Heart left ventricle (tissue), 16 donors: ENCODE measurements at regions of chr14 and their contacts with region 1.

Region 1: DNA sequence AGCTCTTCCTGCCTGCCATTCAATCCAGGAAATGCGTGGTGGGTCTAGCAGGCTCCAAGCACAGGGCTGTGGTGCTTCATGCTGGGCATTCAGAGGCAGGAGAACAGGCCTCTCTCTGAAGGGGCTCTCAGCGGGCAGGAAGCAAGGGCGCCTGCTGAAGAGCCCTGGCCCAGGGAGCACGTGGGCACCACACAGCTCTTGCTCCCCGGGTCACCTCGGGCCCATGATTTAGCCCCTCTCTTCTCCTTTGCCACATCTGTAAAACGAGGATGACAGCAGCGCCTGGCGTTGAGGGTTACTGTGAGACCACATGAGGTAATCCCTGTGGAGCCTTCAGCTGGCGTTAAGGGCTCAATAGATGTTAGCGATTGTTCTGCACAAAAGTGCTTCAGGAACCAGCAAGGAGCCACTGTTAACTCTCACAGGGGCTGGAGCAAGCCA is 37.6 kb upstream of the SPTLC2 start:
- DNase-seq: no peak
- ATAC-seq: peak in 1 of 4 donors; percentile 21
- H3K4me3 ChIP-seq: no peak overlapping the region
- H3K27ac ChIP-seq: no peak overlapping the region
- H3K4me1 ChIP-seq: peaks cover 0 to 30% (median 0%) of the 10 kb centered on the region in 12 donors
- H3K27me3 ChIP-seq: no peaks in the 10 kb centered on the region
- CTCF ChIP-seq: no peak
- POLR2A ChIP-seq: no peak

Region 2: DNA sequence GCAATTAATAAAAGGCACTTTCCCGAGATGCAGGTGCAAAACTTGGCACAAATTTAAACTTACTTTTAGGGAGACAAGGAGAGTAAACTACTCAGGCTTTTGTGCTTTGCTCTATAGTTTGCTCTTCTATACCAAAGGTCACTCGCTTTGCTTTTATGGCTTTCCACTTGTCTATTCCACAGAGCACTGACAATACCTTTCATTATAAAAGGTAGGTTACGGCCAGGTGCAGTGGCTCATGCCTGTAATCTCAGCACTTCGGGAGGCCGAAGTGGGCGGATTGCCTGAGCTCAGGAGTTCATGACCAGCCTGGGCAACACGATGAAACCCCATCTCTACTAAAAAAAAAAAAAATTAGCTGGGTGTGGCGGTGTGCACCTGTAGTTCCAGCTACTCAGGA is 20.9 kb after region 1 on chr14:
- intact Hi-C with region 1: no loop called
- DNase-seq: no peak
- ATAC-seq: no peak
- H3K4me3 ChIP-seq: no peak overlapping the region
- H3K27ac ChIP-seq: no peak overlapping the region
- H3K4me1 ChIP-seq: no peaks in the 10 kb centered on the region
- H3K27me3 ChIP-seq: no peaks in the 10 kb centered on the region
- CTCF ChIP-seq: no peak
- POLR2A ChIP-seq: no peak

Region 3: GRCh38 chr14:77707724-77708408 is 53.8 kb after region 1 on chr14 and contains the starts of genes ALKBH1 and SLIRP:
- intact Hi-C with region 1: loop called in 9 of 10 experiments (anchors 2 to 10 kb)
- DNase-seq: peak; percentile 88 to 92 (median 90)
- ATAC-seq: peak; percentile 96 to 98 (median 98)
- H3K4me3 ChIP-seq: peak within 1 kb of the TSS; percentile 61 to 97 (median 91)
- H3K27ac ChIP-seq: peak within 1 kb of the TSS; percentile 20 to 82 (median 70)
- H3K4me1 ChIP-seq: peaks cover 0 to 37% (median 27%) of the 10 kb centered on the region in 12 donors
- H3K27me3 ChIP-seq: no peaks in the 10 kb centered on the region
- CTCF ChIP-seq: peak in 1 of 12 donors; percentile 1
- POLR2A ChIP-seq: peak in 1 of 2 donors; percentile 58
- total RNA-seq, gene ALKBH1: 10.8 to 16.5 (median 12.5) TPM
- total RNA-seq, gene SLIRP: 112 to 309 (median 169) TPM

Region 4: DNA sequence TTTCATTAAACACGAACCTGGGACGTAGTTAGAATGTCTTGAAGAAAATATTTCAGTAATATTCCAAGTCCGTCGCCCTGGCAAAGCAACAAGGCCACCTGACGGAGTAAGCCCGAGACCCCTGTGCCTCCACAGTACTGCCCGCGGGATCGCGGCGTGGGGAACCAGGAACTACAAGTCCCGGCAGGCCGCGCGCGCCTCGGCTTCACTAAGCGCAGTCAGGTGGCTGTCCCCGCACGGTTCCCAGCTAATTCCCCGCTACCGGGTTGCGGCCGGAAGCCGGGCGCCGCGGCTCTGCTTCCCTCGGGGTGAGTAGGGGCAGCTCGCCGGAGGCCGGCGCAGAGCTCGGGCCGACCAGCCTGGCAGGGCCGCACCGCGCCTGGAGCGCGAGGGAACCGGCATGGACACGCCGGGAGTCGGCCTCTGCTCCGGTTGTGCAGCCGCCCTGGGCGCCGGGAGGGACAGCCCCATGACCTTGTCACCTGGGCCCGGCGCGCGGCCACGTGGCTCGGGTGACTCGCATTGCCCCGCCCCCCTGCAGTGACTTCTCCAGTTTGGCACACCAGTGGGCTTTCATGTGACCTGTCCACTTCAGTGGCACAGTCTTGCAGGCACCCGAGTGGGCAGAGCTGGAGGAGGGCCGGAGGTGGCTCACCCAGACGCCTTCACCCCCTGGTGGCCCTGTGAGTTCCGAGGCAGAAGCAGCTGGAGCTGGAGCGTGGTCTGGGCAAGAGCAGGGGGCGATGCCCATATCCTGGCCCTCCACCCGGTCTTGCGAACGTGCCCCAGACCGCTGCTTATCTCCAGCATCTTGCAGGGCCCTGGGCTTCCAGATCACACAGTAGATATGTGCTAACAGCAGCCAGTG is 146.1 kb after region 1 on chr14 and contains the start of gene ADCK1:
- intact Hi-C with region 1: loop called in 1 of 10 experiments (anchors 10 kb)
- DNase-seq: peak; percentile 91 to 95 (median 94)
- ATAC-seq: peak; percentile 92 to 98 (median 96)
- H3K4me3 ChIP-seq: peak within 1 kb of the TSS; percentile 56 to 100 (median 82)
- H3K27ac ChIP-seq: peak within 1 kb of the TSS; percentile 72 to 98 (median 92)
- H3K4me1 ChIP-seq: peaks cover 0 to 16% (median 7%) of the 10 kb centered on the region in 12 donors
- H3K27me3 ChIP-seq: no peaks in the 10 kb centered on the region
- CTCF ChIP-seq: peak in 8 of 12 donors; percentile 7 to 51 (median 32)
- POLR2A ChIP-seq: peak in 1 of 2 donors; percentile 78
- total RNA-seq, gene ADCK1: 4.0 to 12.0 (median 6.0) TPM

Region 5: GRCh38 chr14:77812028-77812427 is 158.0 kb after region 1 on chr14:
- intact Hi-C with region 1: loop called in 3 of 10 experiments (anchors 2 to 10 kb)
- DNase-seq: no peak
- ATAC-seq: no peak
- H3K4me3 ChIP-seq: no peak overlapping the region
- H3K27ac ChIP-seq: no peak overlapping the region
- H3K4me1 ChIP-seq: no peaks in the 10 kb centered on the region
- H3K27me3 ChIP-seq: no peaks in the 10 kb centered on the region
- CTCF ChIP-seq: no peak
- POLR2A ChIP-seq: no peak

Region 6: DNA sequence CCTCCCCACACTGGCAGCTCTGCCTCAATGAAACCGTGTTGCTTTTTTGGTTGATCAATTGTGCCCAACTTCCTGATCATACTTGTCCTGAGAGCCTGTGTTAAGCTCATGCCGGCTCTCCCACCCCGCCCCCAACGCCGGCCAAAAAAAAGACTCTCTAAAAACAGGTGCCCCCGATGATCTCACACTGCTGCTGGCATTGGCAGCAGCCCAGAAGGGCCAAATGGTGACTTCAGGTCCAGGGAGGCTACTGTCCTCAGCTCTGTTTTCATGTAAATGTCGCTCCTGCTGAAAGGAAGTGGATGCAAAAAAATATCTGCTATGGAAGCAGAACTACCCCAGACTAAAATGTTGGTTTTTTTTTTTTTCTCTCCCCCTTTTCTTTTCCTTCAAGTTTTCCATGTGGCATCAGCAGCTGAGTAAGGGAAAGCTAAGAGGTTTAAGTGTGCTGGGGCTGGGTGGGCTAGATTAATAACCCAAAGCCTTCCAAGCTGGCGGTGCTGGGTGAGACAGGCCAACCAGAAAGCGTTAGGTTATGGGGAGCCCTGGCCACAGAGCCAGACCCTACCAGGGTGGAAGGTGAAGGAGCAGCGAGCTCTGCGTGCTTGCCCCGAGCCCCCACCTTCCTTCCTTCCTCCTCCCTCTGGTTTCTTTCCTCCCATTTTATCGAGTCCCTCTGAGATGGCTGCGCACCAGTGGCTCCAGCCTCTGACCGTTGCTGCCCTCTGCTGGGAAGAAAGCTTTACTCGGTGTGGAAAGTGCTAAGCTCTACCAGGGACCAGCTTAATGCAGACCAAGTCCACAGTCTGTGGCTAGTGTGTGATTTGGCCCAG is 912.2 kb after region 1 on chr14:
- intact Hi-C with region 1: loop called in 3 of 10 experiments (anchors 10 kb)
- DNase-seq: peak; percentile 57 to 75 (median 73)
- ATAC-seq: peak; percentile 90 to 97 (median 94)
- H3K4me3 ChIP-seq: peak overlapping the region in 10 of 12 donors; percentile 15 to 59 (median 33)
- H3K27ac ChIP-seq: peak overlapping the region in 1 of 12 donors; percentile 39
- H3K4me1 ChIP-seq: peaks cover 0 to 8% (median 0%) of the 10 kb centered on the region in 12 donors
- H3K27me3 ChIP-seq: peaks cover 0 to 2% (median 0%) of the 10 kb centered on the region in 9 donors
- CTCF ChIP-seq: peak; percentile 58 to 86 (median 74)
- POLR2A ChIP-seq: no peak